Activated CD4-positive, alpha-beta T cell treated with anti-CD3 and anti-CD28 coated beads, Interleukin-2, amount 10 ng/mL, durations not matched to agents 7 days and 5 days (primary cell): ENCODE measurements at regions of chr2 and their contacts with region 1.

Region 1: DNA sequence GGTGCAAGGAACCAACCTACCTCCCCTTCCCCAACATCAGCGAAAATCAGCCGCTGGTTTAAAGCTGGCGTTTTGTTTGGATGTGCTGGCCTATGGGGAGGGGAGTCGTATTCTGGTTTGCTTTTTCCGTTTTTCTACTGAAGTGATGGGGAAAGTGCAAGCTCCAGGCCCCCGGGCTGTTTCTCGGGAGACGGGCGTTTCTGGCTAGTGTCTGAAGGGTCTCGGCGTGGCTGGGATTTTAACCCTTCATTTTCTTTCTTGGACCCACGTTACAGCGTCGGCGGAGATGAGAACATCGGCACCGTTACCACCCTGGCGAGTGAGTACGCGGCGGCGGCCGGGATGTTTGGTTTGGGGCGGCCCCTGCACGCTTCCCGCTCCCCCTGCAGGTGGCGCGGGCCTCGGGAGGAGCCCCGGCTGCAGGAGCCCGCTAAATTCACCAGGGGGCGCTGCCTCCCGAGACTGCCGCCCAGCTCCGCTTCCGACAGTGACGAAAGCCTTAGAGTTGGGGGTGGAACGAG is 70.7 kb downstream of the PLB1 start:
- DNase-seq: peak; percentile 89
- H3K4me3 Mint-ChIP-seq: peak overlapping the region; percentile 90
- H3K27ac Mint-ChIP-seq: peak overlapping the region; percentile 86
- H3K4me1 Mint-ChIP-seq: peaks cover 30% of the 10 kb centered on the region
- H3K27me3 Mint-ChIP-seq: peaks cover 11% of the 10 kb centered on the region

Region 2: GRCh38 chr2:28537036-28537435 is 29.5 kb before region 1 on chr2:
- CTCF ChIA-PET with region 1: interaction called, 10 read pairs
- POLR2A ChIA-PET with region 1: no interaction called
- DNase-seq: no peak
- H3K4me3 Mint-ChIP-seq: no peak overlapping the region
- H3K27ac Mint-ChIP-seq: no peak overlapping the region
- H3K4me1 Mint-ChIP-seq: peaks cover 1% of the 10 kb centered on the region
- H3K27me3 Mint-ChIP-seq: peaks cover 15% of the 10 kb centered on the region

Region 3: GRCh38 chr2:28577791-28578680 is 11.5 kb after region 1 on chr2:
- CTCF ChIA-PET with region 1: interaction called, 61 read pairs
- POLR2A ChIA-PET with region 1: no interaction called
- DNase-seq: no peak
- H3K4me3 Mint-ChIP-seq: no peak overlapping the region
- H3K27ac Mint-ChIP-seq: no peak overlapping the region
- H3K4me1 Mint-ChIP-seq: peaks cover 15% of the 10 kb centered on the region
- H3K27me3 Mint-ChIP-seq: no peaks in the 10 kb centered on the region

Region 4: GRCh38 chr2:28594289-28595108 is 27.9 kb after region 1 on chr2:
- CTCF ChIA-PET with region 1: interaction called, 20 read pairs
- POLR2A ChIA-PET with region 1: no interaction called
- DNase-seq: peak; percentile 86
- H3K4me3 Mint-ChIP-seq: peak overlapping the region; percentile 35
- H3K27ac Mint-ChIP-seq: peak overlapping the region; percentile 80
- H3K4me1 Mint-ChIP-seq: peaks cover 32% of the 10 kb centered on the region
- H3K27me3 Mint-ChIP-seq: no peaks in the 10 kb centered on the region

Region 5: GRCh38 chr2:28751252-28751955 is 184.8 kb after region 1 on chr2 and contains the start of gene PPP1CB:
- CTCF ChIA-PET with region 1: interaction called, 11 read pairs
- POLR2A ChIA-PET with region 1: no interaction called
- DNase-seq: peak; percentile 94
- H3K4me3 Mint-ChIP-seq: peak within 1 kb of the TSS; percentile 83
- H3K27ac Mint-ChIP-seq: peak within 1 kb of the TSS; percentile 98
- H3K4me1 Mint-ChIP-seq: peaks cover 53% of the 10 kb centered on the region
- H3K27me3 Mint-ChIP-seq: no peaks in the 10 kb centered on the region
- total RNA-seq, gene PPP1CB: 171 to 188 TPM